Naive thymus-derived CD4-positive, alpha-beta T cell (primary cell): ENCODE measurements at regions of chr17 and their contacts with region 1.

Region 1: DNA sequence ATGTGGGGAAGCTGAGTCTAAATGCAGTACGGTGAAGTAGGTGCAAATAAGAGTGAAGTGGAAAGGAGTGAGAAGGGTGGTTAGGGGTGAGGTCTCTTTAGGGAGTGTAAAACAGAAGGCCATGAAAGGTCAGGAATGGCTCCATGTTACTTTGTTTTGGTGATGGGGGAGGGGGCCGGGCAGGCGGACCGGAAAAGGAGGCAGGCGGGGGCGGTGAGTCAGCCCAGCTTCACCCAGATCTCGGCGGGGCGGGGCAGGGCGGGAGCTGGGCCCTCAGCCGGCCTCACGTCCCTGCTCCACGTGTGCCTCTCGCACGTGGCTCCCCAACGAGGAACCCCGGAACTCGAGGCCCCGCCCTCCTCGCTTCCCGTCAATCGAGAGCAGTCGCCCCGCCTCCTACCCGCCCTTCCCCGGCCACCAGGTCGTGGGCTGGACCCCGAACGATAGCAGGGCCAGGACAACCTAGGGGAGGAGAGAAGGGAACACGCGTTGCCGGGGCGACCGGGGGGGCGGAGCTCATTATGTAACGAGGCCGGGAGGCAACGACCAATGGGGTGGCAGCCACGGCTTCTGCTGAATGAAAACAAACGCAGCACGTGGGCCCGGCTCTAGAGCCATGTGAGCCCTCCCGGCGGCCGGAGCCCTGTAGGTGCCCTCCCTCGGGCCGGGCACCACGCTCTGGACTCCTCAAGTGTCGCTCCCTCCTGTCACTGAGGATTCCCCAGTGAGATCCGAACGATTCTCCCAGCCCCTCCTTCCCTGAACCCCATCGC is 1.4 kb downstream of the NR1D1 start:
- DNase-seq: peak; percentile 94 to 99 (median 97)
- ATAC-seq: peak; percentile 78
- H3K4me3 ChIP-seq: peak overlapping the region; percentile 97
- H3K4me3 Mint-ChIP-seq: peak overlapping the region; percentile 82 to 99 (median 97)
- H3K27ac ChIP-seq: peak overlapping the region; percentile 94
- H3K27ac Mint-ChIP-seq: peak overlapping the region; percentile 75 to 100 (median 95)
- H3K4me1 ChIP-seq: peaks cover 62 to 69% of the 10 kb centered on the region in 2 donors
- H3K4me1 Mint-ChIP-seq: peaks cover 68 to 96% (median 84%) of the 10 kb centered on the region in 7 donors
- H3K27me3 ChIP-seq: no peaks in the 10 kb centered on the region
- H3K27me3 Mint-ChIP-seq: peaks cover 0 to 6% (median 0%) of the 10 kb centered on the region in 5 donors

Region 2: GRCh38 chr17:39939588-39940419 is 159.2 kb before region 1 on chr17:
- CTCF ChIA-PET with region 1: no interaction called
- POLR2A ChIA-PET with region 1: no interaction called
- intact Hi-C with region 1: no loop called
- DNase-seq: peak in 6 of 9 donors; percentile 21 to 80 (median 61)
- ATAC-seq: peak; percentile 87
- H3K4me3 ChIP-seq: no peak overlapping the region
- H3K4me3 Mint-ChIP-seq: peak overlapping the region in 1 of 10 donors; percentile 69
- H3K27ac ChIP-seq: no peak overlapping the region
- H3K27ac Mint-ChIP-seq: peak overlapping the region in 5 of 9 donors; percentile 10 to 94 (median 86)
- H3K4me1 ChIP-seq: peaks cover 4 to 7% of the 10 kb centered on the region in 2 donors
- H3K4me1 Mint-ChIP-seq: peaks cover 5 to 23% (median 12%) of the 10 kb centered on the region in 7 donors
- H3K27me3 ChIP-seq: no peaks in the 10 kb centered on the region
- H3K27me3 Mint-ChIP-seq: peaks cover 0 to 3% (median 0%) of the 10 kb centered on the region in 5 donors

Region 3: DNA sequence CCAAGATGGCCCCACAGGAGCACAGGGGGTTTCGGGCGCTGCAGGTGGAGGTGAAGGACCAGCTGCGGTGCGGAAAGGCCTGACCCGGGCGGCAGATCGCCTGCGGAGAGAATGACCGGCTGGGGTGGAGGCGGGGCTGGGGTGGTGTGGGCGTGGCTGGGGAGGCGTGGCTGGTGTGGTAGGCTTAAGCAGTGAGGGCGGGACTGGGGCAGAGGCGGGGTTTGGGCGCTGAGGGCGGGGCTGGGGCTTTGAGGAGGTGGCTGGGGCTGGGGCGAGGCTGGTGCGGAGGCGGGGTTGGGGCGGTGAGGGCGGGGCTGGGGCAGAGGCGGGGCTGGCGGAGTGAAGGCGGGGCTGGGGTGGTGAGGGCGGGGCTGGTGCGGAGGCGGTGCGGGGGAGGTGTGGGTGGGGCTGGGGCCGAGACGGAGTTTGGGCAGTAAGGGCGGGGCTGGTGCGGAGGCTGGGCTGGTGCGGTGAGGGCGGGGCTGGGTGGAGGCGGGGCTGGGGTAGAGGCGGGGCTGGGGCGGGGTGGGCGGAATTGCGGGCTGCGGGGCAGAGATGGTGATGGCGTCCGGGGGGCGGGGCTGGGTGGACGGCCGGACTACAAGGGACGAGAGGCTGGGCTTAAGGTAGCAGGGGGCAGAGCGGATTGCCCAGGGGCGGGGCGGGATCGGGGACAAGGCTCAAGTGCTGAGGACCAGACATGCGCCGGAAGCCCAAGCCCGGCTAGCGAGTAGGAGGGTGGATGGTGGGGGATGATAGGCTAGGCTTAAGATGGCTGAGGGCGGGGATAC is 146.2 kb before region 1 on chr17:
- CTCF ChIA-PET with region 1: no interaction called
- POLR2A ChIA-PET with region 1: no interaction called
- intact Hi-C with region 1: loop called in 1 of 2 experiments (anchors 1 kb)
- DNase-seq: peak; percentile 81 to 98 (median 90)
- ATAC-seq: peak; percentile 94
- H3K4me3 ChIP-seq: peak overlapping the region; percentile 71
- H3K4me3 Mint-ChIP-seq: peak overlapping the region; percentile 68 to 93 (median 82)
- H3K27ac ChIP-seq: peak overlapping the region; percentile 74
- H3K27ac Mint-ChIP-seq: peak overlapping the region; percentile 28 to 87 (median 72)
- H3K4me1 ChIP-seq: peaks cover 5 to 18% of the 10 kb centered on the region in 2 donors
- H3K4me1 Mint-ChIP-seq: peaks cover 1 to 43% (median 27%) of the 10 kb centered on the region in 7 donors
- H3K27me3 ChIP-seq: no peaks in the 10 kb centered on the region
- H3K27me3 Mint-ChIP-seq: peaks cover 0 to 7% (median 0%) of the 10 kb centered on the region in 5 donors

Region 4: DNA sequence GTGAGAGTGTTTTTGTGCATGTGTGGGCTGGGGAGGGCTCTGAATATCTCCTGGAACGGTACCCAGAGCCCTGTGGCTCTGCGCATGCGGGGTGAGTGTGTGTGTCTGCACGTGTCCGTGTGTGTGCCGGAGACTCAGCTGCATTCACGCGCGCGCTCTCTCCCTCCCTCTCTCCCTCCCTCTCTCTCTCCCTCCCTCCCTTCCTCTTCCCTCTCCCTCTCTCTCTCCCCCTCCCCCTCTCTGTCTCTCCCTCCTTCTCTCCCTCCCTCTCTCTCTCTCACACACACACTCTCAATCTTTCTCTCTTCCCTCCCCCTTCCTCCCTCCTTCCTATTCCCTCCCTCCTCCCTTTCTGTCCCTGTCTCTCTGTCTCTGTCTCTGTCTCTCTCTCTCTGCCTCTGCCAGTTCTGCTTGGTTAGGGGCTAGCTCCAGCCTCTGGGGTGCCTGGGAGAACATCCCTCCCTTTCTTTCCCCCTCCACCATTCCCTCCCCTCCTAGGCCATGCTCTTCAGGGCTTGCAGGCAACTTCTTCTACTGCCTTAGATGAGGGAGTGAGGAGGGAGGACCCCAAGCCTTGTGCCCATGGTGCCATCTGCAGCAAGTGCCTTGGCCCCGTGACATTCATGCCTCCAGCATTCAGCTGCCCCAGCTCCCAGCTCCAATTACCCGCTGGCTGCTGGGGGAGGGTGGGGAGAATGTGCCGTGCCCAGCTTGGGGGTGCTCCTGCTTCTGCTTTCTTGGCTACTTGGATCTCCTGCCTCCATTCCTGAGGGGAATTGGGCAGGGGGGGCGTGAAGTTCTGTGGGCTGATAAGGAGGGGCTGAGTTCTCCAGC is 29.9 kb before region 1 on chr17:
- CTCF ChIA-PET with region 1: interaction called, 49 read pairs
- POLR2A ChIA-PET with region 1: interaction called, 62 read pairs
- intact Hi-C with region 1: loop called (anchors 1 kb)
- DNase-seq: peak; percentile 60 to 84 (median 75)
- ATAC-seq: peak; percentile 79
- H3K4me3 ChIP-seq: peak overlapping the region; percentile 45
- H3K4me3 Mint-ChIP-seq: peak overlapping the region; percentile 85 to 94 (median 90)
- H3K27ac ChIP-seq: peak overlapping the region; percentile 75
- H3K27ac Mint-ChIP-seq: peak overlapping the region; percentile 83 to 96 (median 95)
- H3K4me1 ChIP-seq: peaks cover 42 to 71% of the 10 kb centered on the region in 2 donors
- H3K4me1 Mint-ChIP-seq: peaks cover 40 to 93% (median 69%) of the 10 kb centered on the region in 7 donors
- H3K27me3 ChIP-seq: no peaks in the 10 kb centered on the region
- H3K27me3 Mint-ChIP-seq: peaks cover 0 to 12% (median 0%) of the 10 kb centered on the region in 5 donors

Region 5: DNA sequence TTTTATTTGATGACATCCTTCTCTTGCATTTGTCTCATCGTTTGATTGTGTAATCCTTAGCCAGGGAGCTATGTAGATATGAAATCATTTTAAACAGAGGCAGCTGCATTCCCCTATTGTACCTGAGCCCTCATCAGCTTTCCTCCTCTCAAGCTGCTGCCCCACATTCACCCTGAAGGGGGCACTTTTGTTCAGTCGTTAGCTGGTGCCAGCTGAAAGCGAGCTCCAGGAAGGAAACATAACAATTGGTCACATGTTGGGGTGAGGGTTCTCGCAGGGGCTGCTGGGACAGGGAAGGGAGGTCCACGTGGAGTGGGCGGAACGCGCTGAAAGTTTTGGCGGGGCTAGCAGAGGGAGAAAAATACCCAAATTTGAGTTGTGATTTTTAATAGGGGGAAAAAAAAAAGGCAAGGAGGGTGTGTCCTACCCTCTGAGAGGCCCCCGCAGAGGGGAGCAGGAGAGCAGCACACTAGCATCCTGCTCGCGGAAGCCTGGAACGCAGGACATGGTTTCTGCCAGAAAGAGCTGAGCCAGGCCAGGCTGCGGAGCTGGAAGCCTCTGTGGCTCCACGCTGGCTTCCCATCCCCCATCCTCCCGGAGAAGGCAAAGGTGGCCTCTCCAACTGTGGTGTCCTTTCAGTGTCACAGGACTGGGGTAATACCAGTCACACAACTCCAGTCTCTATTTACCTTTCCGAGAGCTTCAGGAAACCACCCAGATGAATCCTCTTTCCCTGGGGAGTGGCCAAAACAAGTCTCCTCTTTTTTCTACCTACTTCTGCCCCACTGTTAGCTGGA is 14.3 kb after region 1 on chr17:
- CTCF ChIA-PET with region 1: interaction called, 133 read pairs
- POLR2A ChIA-PET with region 1: interaction called, 291 read pairs
- intact Hi-C with region 1: loop called (anchors 1 kb)
- DNase-seq: peak; percentile 69 to 95 (median 93)
- ATAC-seq: peak; percentile 89
- H3K4me3 ChIP-seq: peak overlapping the region; percentile 58
- H3K4me3 Mint-ChIP-seq: peak overlapping the region; percentile 75 to 98 (median 85)
- H3K27ac ChIP-seq: peak overlapping the region; percentile 69
- H3K27ac Mint-ChIP-seq: peak overlapping the region; percentile 57 to 100 (median 91)
- H3K4me1 ChIP-seq: peaks cover 52 to 55% of the 10 kb centered on the region in 2 donors
- H3K4me1 Mint-ChIP-seq: peaks cover 41 to 67% (median 56%) of the 10 kb centered on the region in 7 donors
- H3K27me3 ChIP-seq: no peaks in the 10 kb centered on the region
- H3K27me3 Mint-ChIP-seq: no peaks in the 10 kb centered on the region

Region 6: DNA sequence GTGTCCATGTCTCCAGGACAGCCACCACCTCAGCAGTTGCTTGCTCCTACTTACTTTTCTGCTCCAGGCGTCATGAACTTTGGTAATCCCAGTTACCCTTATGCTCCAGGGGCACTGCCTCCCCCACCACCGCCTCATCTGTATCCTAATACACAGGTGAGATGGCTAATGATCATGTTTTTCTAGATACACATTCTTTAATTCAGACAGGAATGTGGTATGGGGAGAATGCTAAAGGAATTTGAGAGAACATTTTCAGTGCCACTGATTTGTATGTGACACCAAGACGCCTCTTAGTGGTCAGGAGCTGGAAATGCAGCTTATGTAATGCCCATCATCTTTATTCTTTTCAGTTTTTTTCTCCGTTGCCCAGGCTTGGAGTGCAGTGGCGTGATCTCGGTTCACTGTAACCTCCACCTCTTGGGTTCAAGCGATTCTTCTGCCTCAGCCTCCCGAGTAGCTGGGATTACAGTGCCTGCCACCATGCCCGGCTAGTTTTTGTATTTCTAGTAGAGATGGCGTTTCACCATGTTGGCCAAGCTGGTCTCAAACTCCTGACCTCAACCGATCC is 69.3 kb after region 1 on chr17:
- CTCF ChIA-PET with region 1: interaction called, 20 read pairs
- POLR2A ChIA-PET with region 1: interaction called, 4 read pairs
- intact Hi-C with region 1: no loop called
- DNase-seq: peak in 7 of 9 donors; percentile 40 to 70 (median 62)
- ATAC-seq: peak; percentile 90
- H3K4me3 ChIP-seq: no peak overlapping the region
- H3K4me3 Mint-ChIP-seq: no peak overlapping the region
- H3K27ac ChIP-seq: peak overlapping the region; percentile 42
- H3K27ac Mint-ChIP-seq: peak overlapping the region; percentile 44 to 93 (median 81)
- H3K4me1 ChIP-seq: no peaks in the 10 kb centered on the region
- H3K4me1 Mint-ChIP-seq: peaks cover 9 to 20% (median 15%) of the 10 kb centered on the region in 7 donors
- H3K27me3 ChIP-seq: no peaks in the 10 kb centered on the region
- H3K27me3 Mint-ChIP-seq: no peaks in the 10 kb centered on the region

Region 7: GRCh38 chr17:40317880-40318829 is 219.1 kb after region 1 on chr17:
- CTCF ChIA-PET with region 1: no interaction called
- POLR2A ChIA-PET with region 1: interaction called, 3 read pairs
- intact Hi-C with region 1: loop called in 1 of 2 experiments (anchors 2 kb)
- DNase-seq: peak; percentile 81 to 91 (median 90)
- ATAC-seq: peak; percentile 76
- H3K4me3 ChIP-seq: peak overlapping the region; percentile 55
- H3K4me3 Mint-ChIP-seq: peak overlapping the region; percentile 89 to 98 (median 97)
- H3K27ac ChIP-seq: peak overlapping the region; percentile 96
- H3K27ac Mint-ChIP-seq: peak overlapping the region; percentile 98 to 100 (median 99)
- H3K4me1 ChIP-seq: peaks cover 49 to 68% of the 10 kb centered on the region in 2 donors
- H3K4me1 Mint-ChIP-seq: peaks cover 32 to 88% (median 74%) of the 10 kb centered on the region in 7 donors
- H3K27me3 ChIP-seq: no peaks in the 10 kb centered on the region
- H3K27me3 Mint-ChIP-seq: peaks cover 0 to 8% (median 0%) of the 10 kb centered on the region in 5 donors

Region 8: GRCh38 chr17:40938637-40939380 is 839.8 kb after region 1 on chr17:
- CTCF ChIA-PET with region 1: no interaction called
- POLR2A ChIA-PET with region 1: no interaction called
- intact Hi-C with region 1: no loop called
- DNase-seq: no peak
- ATAC-seq: no peak
- H3K4me3 ChIP-seq: no peak overlapping the region
- H3K4me3 Mint-ChIP-seq: no peak overlapping the region
- H3K27ac ChIP-seq: no peak overlapping the region
- H3K27ac Mint-ChIP-seq: no peak overlapping the region
- H3K4me1 ChIP-seq: no peaks in the 10 kb centered on the region
- H3K4me1 Mint-ChIP-seq: peaks cover 0 to 4% (median 0%) of the 10 kb centered on the region in 7 donors
- H3K27me3 ChIP-seq: no peaks in the 10 kb centered on the region
- H3K27me3 Mint-ChIP-seq: peaks cover 9 to 31% (median 18%) of the 10 kb centered on the region in 5 donors